ENCODE measurements at regions of chr10 and their contacts with region 1.

Region 1: GRCh38 chr10:96129387-96130325 is at the start of gene ZNF518A:
- DNase-seq: peak; percentile 90
- H3K4me3 Mint-ChIP-seq: peak within 1 kb of the TSS; percentile 94
- H3K27ac Mint-ChIP-seq: peak within 1 kb of the TSS; percentile 100
- H3K4me1 Mint-ChIP-seq: peaks cover 26% of the 10 kb centered on the region
- H3K27me3 Mint-ChIP-seq: peaks cover 20% of the 10 kb centered on the region
- total RNA-seq, gene ZNF518A: 16.0 and 18.0 TPM in 2 replicates

Region 2: DNA sequence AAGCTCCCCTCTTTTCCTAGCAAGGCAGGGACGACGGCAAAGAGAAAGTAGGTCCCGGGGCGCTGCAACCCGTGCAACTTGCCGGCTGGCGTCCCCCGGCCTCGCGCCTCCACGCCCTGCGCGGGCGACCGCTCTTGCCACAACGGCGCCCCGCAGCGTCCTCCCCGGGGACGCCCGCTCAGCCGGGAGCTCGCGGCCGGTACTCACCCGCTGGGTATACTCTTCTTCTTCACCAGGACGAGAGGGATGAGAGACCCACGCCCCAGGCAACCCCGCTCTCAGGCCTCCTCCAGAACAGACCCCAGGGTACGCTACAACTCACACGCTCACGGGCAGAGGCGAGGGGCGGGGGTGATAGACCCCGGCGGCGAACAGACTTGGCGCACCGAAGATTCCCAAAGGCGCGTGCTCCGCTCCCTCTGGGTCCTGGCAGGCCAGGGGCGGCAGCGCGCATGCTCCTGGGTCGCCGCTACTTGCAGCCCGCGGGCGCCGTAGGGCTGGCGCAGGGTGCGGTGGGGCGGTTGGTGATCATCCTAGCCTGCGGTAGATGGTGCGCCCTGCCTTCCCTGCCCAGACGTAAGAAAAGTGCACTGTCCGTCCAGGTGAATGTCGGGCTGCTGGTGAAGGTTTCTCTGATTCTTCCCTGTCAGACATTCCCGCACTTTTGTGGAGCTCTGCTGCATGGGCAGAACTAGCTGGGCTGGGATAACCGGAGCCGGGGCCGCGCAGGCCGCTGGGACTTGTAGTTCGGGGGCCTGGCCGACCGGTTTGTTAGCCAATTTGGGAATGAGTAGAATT is 222.0 kb before region 1 on chr10 and contains the start of gene CC2D2B:
- intact Hi-C with region 1: loop called (anchors 5 kb)
- DNase-seq: peak; percentile 70
- H3K4me3 Mint-ChIP-seq: peak within 1 kb of the TSS; percentile 92
- H3K27ac Mint-ChIP-seq: peak within 1 kb of the TSS; percentile 93
- H3K4me1 Mint-ChIP-seq: peaks cover 18% of the 10 kb centered on the region
- H3K27me3 Mint-ChIP-seq: peaks cover 10% of the 10 kb centered on the region
- total RNA-seq, gene CC2D2B: 0.18 and 0.75 TPM in 2 replicates

Region 3: GRCh38 chr10:95925033-95925432 is 204.6 kb before region 1 on chr10:
- intact Hi-C with region 1: no loop called
- DNase-seq: no peak
- H3K4me3 Mint-ChIP-seq: no peak overlapping the region
- H3K27ac Mint-ChIP-seq: no peak overlapping the region
- H3K4me1 Mint-ChIP-seq: no peaks in the 10 kb centered on the region
- H3K27me3 Mint-ChIP-seq: peaks cover 21% of the 10 kb centered on the region

Region 4: DNA sequence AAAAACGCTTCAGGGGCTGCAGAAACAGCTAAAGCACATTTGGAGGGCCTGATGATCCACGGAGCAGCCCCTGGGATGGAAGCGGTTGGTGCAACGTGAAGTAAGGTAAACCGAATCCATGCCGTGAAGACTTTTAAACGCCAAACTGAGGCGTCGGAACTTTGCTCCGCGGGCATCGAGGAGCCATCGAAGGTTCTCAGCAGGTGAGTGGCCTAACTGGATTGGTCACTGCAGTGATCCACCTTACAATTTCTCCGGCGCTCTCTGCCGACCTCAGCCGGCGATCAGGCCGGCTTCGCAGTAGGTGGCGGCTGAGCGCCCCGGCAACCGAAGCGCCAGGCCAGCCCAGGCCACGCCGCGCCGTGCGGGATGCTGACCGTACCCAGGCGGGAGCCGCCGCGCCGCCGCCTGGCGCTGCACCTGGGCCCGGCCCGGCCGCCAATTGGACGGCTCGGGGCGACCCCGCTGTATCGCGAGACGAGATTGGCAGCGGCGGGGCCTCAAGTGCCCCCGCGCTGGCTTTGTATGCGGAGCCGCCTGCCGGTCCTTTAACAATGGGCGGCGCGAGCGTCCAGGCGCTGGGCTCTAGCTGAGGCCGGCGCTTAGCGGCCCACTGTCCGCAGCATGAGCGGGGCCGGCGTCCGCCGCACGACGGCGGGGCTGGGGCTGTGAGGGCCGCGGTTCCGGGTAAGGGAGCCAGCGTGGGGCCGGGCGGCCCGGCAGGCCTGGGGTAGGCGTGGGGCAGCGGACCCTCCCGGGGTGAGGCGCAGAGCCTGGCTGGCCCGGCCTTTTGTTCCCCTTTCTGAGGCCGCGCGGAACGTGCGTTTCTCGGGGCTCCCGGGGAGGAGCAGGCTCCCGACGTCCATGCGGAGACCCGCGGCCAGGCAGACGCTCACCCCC is 86.4 kb before region 1 on chr10 and contains the start of gene CCNJ:
- intact Hi-C with region 1: loop called (anchors 2 kb)
- DNase-seq: peak; percentile 76
- H3K4me3 Mint-ChIP-seq: peak within 1 kb of the TSS; percentile 92
- H3K27ac Mint-ChIP-seq: peak within 1 kb of the TSS; percentile 73
- H3K4me1 Mint-ChIP-seq: peaks cover 34% of the 10 kb centered on the region
- H3K27me3 Mint-ChIP-seq: peaks cover 4% of the 10 kb centered on the region
- total RNA-seq, gene CCNJ: 8.3 and 9.3 TPM in 2 replicates

Region 5: GRCh38 chr10:96061232-96061631 is 68.4 kb before region 1 on chr10:
- intact Hi-C with region 1: loop called (anchors 1 kb)
- DNase-seq: no peak
- H3K4me3 Mint-ChIP-seq: no peak overlapping the region
- H3K27ac Mint-ChIP-seq: no peak overlapping the region
- H3K4me1 Mint-ChIP-seq: peaks cover 41% of the 10 kb centered on the region
- H3K27me3 Mint-ChIP-seq: peaks cover 3% of the 10 kb centered on the region

Region 6: DNA sequence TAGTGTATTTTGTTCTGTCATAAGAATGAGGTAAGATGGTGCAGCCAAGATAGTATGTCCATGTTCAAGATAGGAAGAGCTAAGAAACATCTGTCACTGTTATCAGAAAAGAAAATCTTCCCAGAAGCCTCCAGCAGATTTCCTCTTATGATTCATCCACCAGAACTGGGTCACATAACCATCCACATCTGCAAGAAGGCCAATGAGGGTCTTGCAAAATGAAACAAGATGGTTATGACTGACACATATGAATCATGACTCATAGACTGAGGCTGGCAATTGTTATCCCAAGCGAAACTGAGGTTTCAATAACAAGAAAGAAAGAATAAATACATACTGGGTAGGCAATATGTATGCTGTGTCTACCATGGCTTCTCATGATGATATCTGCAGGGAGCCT is 55.9 kb before region 1 on chr10:
- intact Hi-C with region 1: loop called (anchors 1 kb)
- DNase-seq: peak; percentile 18
- H3K4me3 Mint-ChIP-seq: no peak overlapping the region
- H3K27ac Mint-ChIP-seq: peak overlapping the region; percentile 20
- H3K4me1 Mint-ChIP-seq: peaks cover 32% of the 10 kb centered on the region
- H3K27me3 Mint-ChIP-seq: no peaks in the 10 kb centered on the region

Region 7: DNA sequence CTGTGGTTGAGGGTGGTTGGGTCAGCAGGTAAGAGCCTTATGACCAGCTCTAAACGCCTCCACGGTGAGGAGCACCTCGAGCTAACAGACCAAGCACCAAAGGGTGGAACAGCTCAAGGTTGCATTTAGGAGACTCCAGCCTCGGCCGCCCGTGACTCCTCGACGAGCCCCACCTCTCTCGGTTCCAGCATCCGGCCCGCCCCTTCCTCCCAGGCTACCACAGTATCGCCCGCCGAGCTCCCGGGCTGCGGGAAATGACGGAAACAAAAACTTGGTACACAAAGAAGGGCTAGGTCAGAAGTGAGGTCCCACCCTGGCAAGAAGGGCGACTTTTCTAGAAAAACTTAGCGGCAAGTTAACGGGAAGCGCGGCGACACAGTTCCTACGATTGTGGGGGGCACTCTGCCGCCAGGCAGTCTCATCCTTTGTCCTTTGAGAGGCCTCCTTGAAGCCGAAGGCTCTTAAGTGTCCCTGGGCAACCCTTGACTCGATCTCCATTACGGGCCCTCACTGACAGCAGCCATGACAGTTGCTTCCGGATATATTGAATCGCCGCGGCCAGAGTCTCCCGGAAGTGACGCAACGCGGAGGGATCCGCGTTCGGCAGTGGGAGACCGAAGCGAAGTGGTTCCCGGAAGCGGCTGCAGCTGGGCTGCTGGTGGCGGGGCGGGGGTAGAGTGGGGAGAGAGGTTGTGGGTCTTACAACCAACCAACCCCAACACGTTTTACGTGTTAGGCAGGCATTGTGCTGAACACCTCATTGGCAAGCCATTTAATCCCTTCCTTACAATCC is 39.8 kb before region 1 on chr10:
- intact Hi-C with region 1: loop called (anchors 1 kb)
- DNase-seq: peak; percentile 89
- H3K4me3 Mint-ChIP-seq: peak overlapping the region; percentile 91
- H3K27ac Mint-ChIP-seq: peak overlapping the region; percentile 98
- H3K4me1 Mint-ChIP-seq: peaks cover 9% of the 10 kb centered on the region
- H3K27me3 Mint-ChIP-seq: peaks cover 15% of the 10 kb centered on the region

Region 8: DNA sequence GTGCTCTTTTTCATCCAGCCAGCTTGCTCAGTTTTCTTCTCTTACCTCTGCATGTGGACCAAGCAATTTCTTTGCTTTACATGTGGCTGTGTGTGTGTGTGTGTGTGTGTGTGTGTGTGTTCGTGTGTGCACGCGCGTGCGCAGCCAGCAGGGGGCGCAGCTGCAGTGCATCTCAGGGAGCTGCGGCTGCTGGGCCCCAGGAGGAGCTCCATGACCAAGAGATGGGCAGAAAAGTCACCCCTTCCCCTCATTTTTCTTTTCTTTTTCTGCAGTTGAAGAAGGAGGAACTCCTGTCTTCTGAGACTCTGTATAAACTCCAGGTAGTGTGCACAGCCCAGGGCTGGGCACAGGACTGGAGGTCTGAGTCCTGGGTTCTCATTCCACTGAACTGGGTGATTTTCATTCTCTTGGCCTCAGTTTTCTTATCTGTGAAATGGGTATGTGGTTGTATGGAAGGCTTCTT is 99.9 kb after region 1 on chr10:
- intact Hi-C with region 1: no loop called
- DNase-seq: peak; percentile 51
- H3K4me3 Mint-ChIP-seq: no peak overlapping the region
- H3K27ac Mint-ChIP-seq: no peak overlapping the region
- H3K4me1 Mint-ChIP-seq: peaks cover 2% of the 10 kb centered on the region
- H3K27me3 Mint-ChIP-seq: no peaks in the 10 kb centered on the region

Region 9: GRCh38 chr10:96306516-96306915 is 176.9 kb after region 1 on chr10:
- intact Hi-C with region 1: no loop called
- DNase-seq: no peak
- H3K4me3 Mint-ChIP-seq: no peak overlapping the region
- H3K27ac Mint-ChIP-seq: no peak overlapping the region
- H3K4me1 Mint-ChIP-seq: peaks cover 7% of the 10 kb centered on the region
- H3K27me3 Mint-ChIP-seq: peaks cover 38% of the 10 kb centered on the region

Region 10: DNA sequence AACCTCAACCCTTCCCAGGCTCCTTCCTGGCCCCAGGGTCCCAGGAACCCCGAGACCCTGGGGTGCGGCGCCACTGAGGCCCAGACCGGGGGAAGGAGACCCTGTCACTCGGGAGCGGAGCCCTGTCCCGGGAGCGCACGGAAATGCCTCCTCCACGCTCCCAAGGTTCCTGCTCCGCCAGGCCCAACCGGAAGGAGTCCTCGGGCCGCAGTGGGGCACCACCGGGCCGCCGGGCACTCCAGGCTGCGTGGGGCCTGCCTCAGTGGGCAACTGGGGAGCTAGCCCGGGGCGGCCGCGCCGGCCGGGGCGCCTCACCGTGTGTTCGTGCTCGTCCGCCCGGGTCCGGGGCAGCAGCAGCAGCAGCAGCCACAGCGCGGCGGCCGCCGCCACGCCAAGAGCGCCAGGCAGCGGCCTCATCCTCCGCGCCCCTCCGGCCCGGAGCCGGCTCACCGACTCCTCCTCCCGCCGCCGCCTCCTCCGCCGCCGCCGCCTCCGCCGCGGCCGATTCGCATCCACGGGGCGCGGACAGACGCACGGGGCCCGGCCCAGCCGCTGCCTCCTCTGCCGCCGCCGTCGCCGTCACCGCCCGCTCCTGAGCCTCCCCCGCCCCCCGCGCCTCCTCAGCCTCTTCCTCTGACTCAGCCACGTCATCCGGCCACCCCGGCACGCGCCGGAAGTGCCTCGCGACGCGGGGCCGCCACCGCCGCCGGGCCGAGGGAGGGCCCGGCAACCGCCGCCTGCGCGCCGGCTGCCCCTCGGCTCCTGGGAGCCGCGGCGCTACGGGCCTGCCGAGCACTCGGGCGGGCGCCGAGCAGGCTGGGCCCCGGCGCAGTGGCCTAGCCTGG is 457.0 kb after region 1 on chr10 and contains the start of gene TM9SF3:
- intact Hi-C with region 1: loop called (anchors 5 kb)
- DNase-seq: peak; percentile 87
- H3K4me3 Mint-ChIP-seq: peak within 1 kb of the TSS; percentile 95
- H3K27ac Mint-ChIP-seq: peak within 1 kb of the TSS; percentile 88
- H3K4me1 Mint-ChIP-seq: peaks cover 29% of the 10 kb centered on the region
- H3K27me3 Mint-ChIP-seq: peaks cover 10% of the 10 kb centered on the region
- total RNA-seq, gene TM9SF3: 81.3 and 82.3 TPM in 2 replicates